Naive thymus-derived CD4-positive, alpha-beta T cell (primary cell): ENCODE measurements at regions of chr4 and their contacts with region 1.

Region 1: DNA sequence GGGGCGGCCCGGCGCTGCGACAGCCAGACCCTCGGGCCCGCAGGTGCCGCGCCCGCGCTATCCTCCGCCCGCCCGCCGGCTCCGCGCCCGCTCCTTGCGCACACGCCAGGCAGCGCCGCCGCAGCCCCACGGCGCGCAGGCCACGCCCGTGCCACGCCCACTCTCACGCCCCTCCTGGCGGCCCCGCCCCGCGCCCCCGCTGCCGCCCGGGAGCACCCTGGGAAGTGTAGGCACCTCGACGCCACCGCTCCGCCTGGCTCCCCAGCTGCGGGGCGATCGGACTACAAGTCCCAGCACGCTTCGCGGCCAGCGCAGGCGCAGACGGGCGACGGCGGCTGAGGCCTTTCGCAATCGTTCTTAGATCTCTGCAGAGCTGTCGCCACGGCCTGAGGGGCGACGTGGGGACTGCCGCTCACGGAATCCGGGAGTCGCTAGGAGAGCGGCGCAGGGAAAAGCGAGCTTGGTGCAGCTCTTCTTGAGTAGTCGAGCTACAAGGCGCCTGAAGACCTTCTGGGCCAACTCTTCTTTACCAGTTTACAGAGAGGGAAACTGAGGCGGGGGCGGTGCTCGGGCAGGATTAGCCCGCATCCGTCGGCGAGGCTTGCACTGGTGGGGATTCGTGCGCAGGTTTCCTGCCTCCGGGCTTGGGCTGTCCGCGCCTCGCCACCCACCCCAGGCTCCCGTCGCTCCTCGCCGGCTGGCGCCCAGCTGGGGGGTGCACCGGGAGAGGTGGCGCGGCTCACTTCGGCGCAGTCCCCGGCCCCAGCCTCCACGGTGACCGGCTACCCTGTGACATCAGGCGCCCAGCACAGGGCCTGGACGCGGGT is at the start of gene ABLIM2:
- DNase-seq: peak; percentile 96 to 100 (median 100)
- ATAC-seq: peak; percentile 100
- H3K4me3 ChIP-seq: peak within 1 kb of the TSS; percentile 95
- H3K4me3 Mint-ChIP-seq: peak within 1 kb of the TSS; percentile 92 to 100 (median 97)
- H3K27ac ChIP-seq: peak within 1 kb of the TSS; percentile 77
- H3K27ac Mint-ChIP-seq: peak within 1 kb of the TSS; percentile 84 to 96 (median 91)
- H3K4me1 ChIP-seq: peaks cover 10 to 13% of the 10 kb centered on the region in 2 donors
- H3K4me1 Mint-ChIP-seq: peaks cover 7 to 25% (median 18%) of the 10 kb centered on the region in 7 donors
- H3K27me3 ChIP-seq: no peaks in the 10 kb centered on the region
- H3K27me3 Mint-ChIP-seq: peaks cover 0 to 31% (median 4%) of the 10 kb centered on the region in 5 donors
- total RNA-seq, gene ABLIM2: 0.22 to 4.9 (median 3.1) TPM

Region 2: GRCh38 chr4:7761720-7762119 is 397.2 kb before region 1 on chr4:
- CTCF ChIA-PET with region 1: interaction called, 3 read pairs
- POLR2A ChIA-PET with region 1: no interaction called
- intact Hi-C with region 1: loop called in 1 of 2 experiments (anchors 5 kb)
- DNase-seq: peak in 8 of 9 donors; percentile 33 to 65 (median 52)
- ATAC-seq: peak; percentile 74
- H3K4me3 ChIP-seq: no peak overlapping the region
- H3K4me3 Mint-ChIP-seq: peak overlapping the region in 5 of 10 donors; percentile 27 to 49 (median 37)
- H3K27ac ChIP-seq: peak overlapping the region; percentile 10
- H3K27ac Mint-ChIP-seq: peak overlapping the region; percentile 47 to 100 (median 92)
- H3K4me1 ChIP-seq: peaks cover 18 to 30% of the 10 kb centered on the region in 2 donors
- H3K4me1 Mint-ChIP-seq: peaks cover 13 to 49% (median 37%) of the 10 kb centered on the region in 7 donors
- H3K27me3 ChIP-seq: no peaks in the 10 kb centered on the region
- H3K27me3 Mint-ChIP-seq: no peaks in the 10 kb centered on the region

Region 3: GRCh38 chr4:8015512-8015911 is 143.4 kb before region 1 on chr4:
- CTCF ChIA-PET with region 1: no interaction called
- POLR2A ChIA-PET with region 1: no interaction called
- intact Hi-C with region 1: no loop called
- DNase-seq: no peak
- ATAC-seq: no peak
- H3K4me3 ChIP-seq: no peak overlapping the region
- H3K4me3 Mint-ChIP-seq: no peak overlapping the region
- H3K27ac ChIP-seq: no peak overlapping the region
- H3K27ac Mint-ChIP-seq: no peak overlapping the region
- H3K4me1 ChIP-seq: no peaks in the 10 kb centered on the region
- H3K4me1 Mint-ChIP-seq: peaks cover 0 to 5% (median 0%) of the 10 kb centered on the region in 7 donors
- H3K27me3 ChIP-seq: no peaks in the 10 kb centered on the region
- H3K27me3 Mint-ChIP-seq: peaks cover 0 to 18% (median 0%) of the 10 kb centered on the region in 5 donors

Region 4: DNA sequence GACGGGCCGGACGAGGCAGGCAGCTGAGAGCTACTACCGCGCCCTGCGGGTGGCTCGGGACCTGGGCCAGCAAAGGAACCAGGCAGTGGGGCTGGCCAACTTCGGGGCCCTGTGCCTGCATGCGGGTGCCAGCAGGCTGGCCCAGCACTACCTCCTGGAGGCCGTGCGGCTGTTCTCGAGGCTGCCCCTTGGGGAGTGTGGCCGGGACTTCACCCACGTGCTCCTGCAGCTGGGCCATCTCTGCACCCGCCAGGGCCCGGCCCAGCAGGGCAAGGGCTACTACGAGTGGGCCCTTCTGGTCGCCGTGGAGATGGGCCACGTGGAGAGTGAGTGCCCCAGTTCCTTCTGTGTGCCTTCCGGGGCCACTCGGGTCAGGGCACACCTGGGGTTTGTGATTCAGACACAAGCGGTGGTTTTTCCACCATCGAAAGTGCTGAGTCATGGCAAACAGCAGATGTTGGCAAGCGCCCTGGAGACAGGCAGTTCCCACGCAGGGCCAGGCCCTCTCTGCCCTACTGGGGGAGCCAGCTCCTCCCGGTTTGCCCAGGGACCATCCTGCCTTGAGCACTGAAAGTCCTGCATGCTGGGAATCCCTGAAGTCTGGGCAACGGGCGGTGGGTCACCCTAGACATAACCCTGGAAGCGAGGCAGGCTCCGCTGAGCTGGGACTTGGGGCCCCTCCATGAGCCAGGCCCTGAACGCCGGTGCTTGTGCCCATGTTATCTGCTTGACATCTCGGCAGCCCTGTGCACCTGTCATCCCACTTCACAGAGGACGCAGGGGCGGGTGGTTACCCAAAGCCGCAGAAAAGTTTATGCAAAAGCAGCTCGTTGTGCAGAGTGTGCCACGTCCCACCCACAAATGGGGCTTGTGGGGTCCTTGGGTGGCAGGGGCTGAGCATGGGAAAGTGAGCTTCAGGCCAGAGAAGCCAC is 69.7 kb after region 1 on chr4:
- CTCF ChIA-PET with region 1: no interaction called
- POLR2A ChIA-PET with region 1: no interaction called
- intact Hi-C with region 1: loop called (anchors 1 to 2 kb)
- DNase-seq: peak; percentile 35 to 80 (median 77)
- ATAC-seq: peak; percentile 83
- H3K4me3 ChIP-seq: peak overlapping the region; percentile 11
- H3K4me3 Mint-ChIP-seq: peak overlapping the region in 9 of 10 donors; percentile 48 to 87 (median 71)
- H3K27ac ChIP-seq: peak overlapping the region; percentile 55
- H3K27ac Mint-ChIP-seq: peak overlapping the region; percentile 27 to 97 (median 86)
- H3K4me1 ChIP-seq: peaks cover 20 to 56% of the 10 kb centered on the region in 2 donors
- H3K4me1 Mint-ChIP-seq: peaks cover 16 to 50% (median 28%) of the 10 kb centered on the region in 7 donors
- H3K27me3 ChIP-seq: no peaks in the 10 kb centered on the region
- H3K27me3 Mint-ChIP-seq: no peaks in the 10 kb centered on the region

Region 5: DNA sequence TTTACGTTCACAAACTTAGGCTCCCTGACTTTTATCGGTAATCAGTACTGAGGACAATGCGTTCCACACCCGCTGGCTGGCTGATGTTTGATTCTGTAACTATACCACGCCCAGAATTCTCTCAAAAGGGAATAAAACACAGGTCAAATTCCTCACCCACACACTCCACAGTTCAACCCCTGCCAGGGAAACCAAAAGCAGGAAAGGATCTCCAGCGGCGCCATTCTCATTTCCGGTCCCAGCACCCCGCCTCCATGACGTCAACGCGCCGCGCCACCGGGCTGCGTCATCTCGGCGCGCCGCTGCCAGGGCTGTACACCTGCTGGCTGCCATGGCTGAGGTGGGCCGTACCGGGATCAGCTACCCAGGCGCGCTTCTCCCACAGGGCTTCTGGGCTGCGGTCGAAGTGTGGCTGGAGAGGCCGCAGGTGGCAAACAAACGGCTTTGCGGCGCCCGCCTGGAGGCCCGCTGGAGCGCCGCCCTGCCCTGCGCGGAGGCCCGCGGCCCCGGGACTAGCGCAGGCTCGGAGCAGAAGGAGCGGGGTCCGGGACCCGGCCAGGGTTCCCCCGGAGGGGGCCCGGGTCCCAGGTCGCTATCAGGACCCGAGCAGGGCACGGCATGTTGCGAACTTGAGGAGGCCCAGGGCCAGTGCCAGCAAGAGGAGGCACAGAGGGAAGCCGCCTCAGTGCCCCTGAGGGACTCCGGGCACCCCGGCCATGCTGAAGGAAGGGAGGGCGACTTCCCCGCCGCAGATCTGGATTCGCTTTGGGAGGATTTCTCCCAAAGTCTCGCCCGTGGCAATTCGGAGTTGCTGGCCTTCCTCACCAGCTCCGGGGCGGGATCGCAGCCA is 281.8 kb after region 1 on chr4 and contains the starts of genes ACOX3 and TRMT44:
- CTCF ChIA-PET with region 1: no interaction called
- POLR2A ChIA-PET with region 1: interaction called, 5 read pairs
- intact Hi-C with region 1: loop called (anchors 1 kb)
- DNase-seq: peak; percentile 89 to 100 (median 97)
- ATAC-seq: peak; percentile 97
- H3K4me3 ChIP-seq: peak within 1 kb of the TSS; percentile 92
- H3K4me3 Mint-ChIP-seq: peak within 1 kb of the TSS; percentile 93 to 100 (median 96)
- H3K27ac ChIP-seq: peak within 1 kb of the TSS; percentile 89
- H3K27ac Mint-ChIP-seq: peak within 1 kb of the TSS; percentile 98 to 100 (median 99)
- H3K4me1 ChIP-seq: peaks cover 31 to 37% of the 10 kb centered on the region in 2 donors
- H3K4me1 Mint-ChIP-seq: peaks cover 62 to 89% (median 81%) of the 10 kb centered on the region in 7 donors
- H3K27me3 ChIP-seq: no peaks in the 10 kb centered on the region
- H3K27me3 Mint-ChIP-seq: peaks cover 0 to 2% (median 0%) of the 10 kb centered on the region in 5 donors
- total RNA-seq, gene ACOX3: 10.9 to 20.5 (median 14.8) TPM
- total RNA-seq, gene TRMT44: 28.5 to 33.7 (median 29.6) TPM